Adrenal gland (tissue), 19 donors: ENCODE measurements at regions of chr4 and their contacts with region 1.

Region 1: DNA sequence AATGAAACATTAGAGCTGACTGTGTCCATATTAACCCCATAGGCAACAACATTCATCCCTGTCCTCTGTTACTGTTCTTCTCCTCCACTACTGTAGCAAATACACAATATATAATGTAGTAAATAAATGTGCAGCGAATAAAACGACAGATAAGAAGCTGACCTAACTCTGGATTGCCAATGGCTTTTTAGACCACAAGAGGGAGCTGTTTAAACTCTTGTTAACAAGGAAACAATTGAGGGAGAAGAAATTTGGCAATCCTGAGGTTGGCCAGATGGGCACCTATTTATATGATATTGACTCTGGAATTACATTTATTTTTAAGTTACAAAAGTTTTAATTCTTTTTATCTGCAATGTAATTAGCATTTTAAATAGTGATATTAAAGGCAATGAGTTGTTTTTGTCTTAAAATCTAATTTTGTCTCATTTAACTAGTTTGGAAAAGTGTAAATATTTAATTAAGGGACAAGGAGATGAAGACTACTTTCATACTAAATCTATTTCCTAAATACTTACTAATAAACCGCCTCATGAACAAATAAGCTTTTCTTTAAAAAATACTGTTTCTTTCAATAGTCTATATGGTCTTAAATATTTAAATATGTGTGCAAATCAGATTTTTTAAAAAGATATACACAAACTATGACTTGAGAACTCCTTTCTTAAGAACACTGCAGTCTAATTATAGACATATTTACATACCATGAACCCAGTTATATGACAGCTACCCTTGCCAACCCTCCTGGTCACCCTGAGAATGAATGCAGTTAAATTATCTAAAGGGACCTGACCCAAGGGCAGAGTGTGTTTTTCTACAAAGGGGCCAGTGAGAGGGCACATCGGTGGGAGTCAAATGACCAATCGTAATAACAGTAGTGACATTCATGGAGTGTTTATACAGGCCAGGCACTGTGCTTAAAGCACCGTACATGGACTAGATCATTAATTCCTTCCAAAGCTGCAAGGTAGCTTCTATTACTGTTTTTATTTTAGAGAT is 52.9 kb upstream of the HPF1 start:
- DNase-seq: peak in 6 of 7 donors; percentile 33 to 64 (median 46)
- H3K4me3 ChIP-seq: no peak overlapping the region
- H3K27ac ChIP-seq: no peak overlapping the region
- H3K4me1 ChIP-seq: no peaks in the 10 kb centered on the region
- H3K27me3 ChIP-seq: no peaks in the 10 kb centered on the region
- CTCF ChIP-seq: peak; percentile 72 to 89 (median 81)
- POLR2A ChIP-seq: no peak

Region 2: GRCh38 chr4:170040031-170040680 is 229.5 kb after region 1 on chr4:
- intact Hi-C with region 1: loop called (anchors 5 kb)
- DNase-seq: no peak
- H3K4me3 ChIP-seq: no peak overlapping the region
- H3K27ac ChIP-seq: no peak overlapping the region
- H3K4me1 ChIP-seq: no peaks in the 10 kb centered on the region
- H3K27me3 ChIP-seq: no peaks in the 10 kb centered on the region
- CTCF ChIP-seq: no peak
- POLR2A ChIP-seq: no peak

Region 3: GRCh38 chr4:170047771-170048354 is 237.2 kb after region 1 on chr4:
- intact Hi-C with region 1: loop called (anchors 5 kb)
- DNase-seq: peak; percentile 25 to 83 (median 55)
- H3K4me3 ChIP-seq: no peak overlapping the region
- H3K27ac ChIP-seq: no peak overlapping the region
- H3K4me1 ChIP-seq: no peaks in the 10 kb centered on the region
- H3K27me3 ChIP-seq: peaks cover 16% of the 10 kb centered on the region
- CTCF ChIP-seq: peak; percentile 59 to 88 (median 79)
- POLR2A ChIP-seq: no peak